ENCODE measurements at regions of chr3 and their contacts with region 1.

Region 1: GRCh38 chr3:48847504-48848423 is at the start of gene PRKAR2A:
- DNase-seq: peak; percentile 92
- H3K4me3 ChIP-seq: peak within 1 kb of the TSS; percentile 48 to 68 (median 59)
- H3K27ac ChIP-seq: peak within 1 kb of the TSS; percentile 44
- H3K4me1 ChIP-seq: peaks cover 9% of the 10 kb centered on the region
- H3K27me3 ChIP-seq: no peaks in the 10 kb centered on the region
- CTCF ChIP-seq: no peak
- POLR2A ChIP-seq: peak; percentile 69
- total RNA-seq, gene PRKAR2A: 62.8 and 69.9 TPM in 2 replicates

Region 2: DNA sequence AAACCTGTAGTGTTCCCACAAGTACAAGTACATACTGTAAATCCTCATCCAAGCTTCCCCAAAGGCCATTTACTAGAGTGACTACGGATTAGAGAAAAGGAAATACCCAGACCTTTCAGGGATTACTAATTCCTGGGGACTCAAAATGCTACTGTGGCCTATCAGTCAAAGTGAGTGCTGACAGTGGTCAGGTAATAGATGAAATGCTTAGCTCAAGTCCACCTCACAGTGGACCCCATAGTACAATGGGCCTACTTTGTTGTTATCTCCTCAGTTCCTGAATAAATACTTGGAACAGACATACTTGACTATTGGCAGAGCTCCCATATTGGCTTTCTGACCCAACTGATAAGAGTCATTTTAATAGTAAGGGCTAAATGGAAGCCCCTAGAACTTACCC is 893.2 kb before region 1 on chr3:
- CTCF ChIA-PET with region 1: no interaction called
- POLR2A ChIA-PET with region 1: no interaction called
- dilution Hi-C with region 1: no loop called
- intact Hi-C with region 1: no loop called
- DNase-seq: peak; percentile 57
- H3K4me3 ChIP-seq: no peak overlapping the region
- H3K27ac ChIP-seq: no peak overlapping the region
- H3K4me1 ChIP-seq: no peaks in the 10 kb centered on the region
- H3K27me3 ChIP-seq: no peaks in the 10 kb centered on the region
- CTCF ChIP-seq: no peak
- POLR2A ChIP-seq: no peak

Region 3: GRCh38 chr3:48877671-48878070 is 29.9 kb after region 1 on chr3:
- CTCF ChIA-PET with region 1: no interaction called
- POLR2A ChIA-PET with region 1: no interaction called
- dilution Hi-C with region 1: no loop called
- intact Hi-C with region 1: no loop called
- DNase-seq: no peak
- H3K4me3 ChIP-seq: no peak overlapping the region
- H3K27ac ChIP-seq: no peak overlapping the region
- H3K4me1 ChIP-seq: no peaks in the 10 kb centered on the region
- H3K27me3 ChIP-seq: no peaks in the 10 kb centered on the region
- CTCF ChIP-seq: no peak
- POLR2A ChIP-seq: no peak

Region 4: GRCh38 chr3:48898383-48899234 is 50.8 kb after region 1 on chr3 and contains the start of gene SLC25A20:
- CTCF ChIA-PET with region 1: no interaction called
- POLR2A ChIA-PET with region 1: no interaction called
- dilution Hi-C with region 1: no loop called
- intact Hi-C with region 1: loop called (anchors 5 kb)
- DNase-seq: peak; percentile 80
- H3K4me3 ChIP-seq: peak within 1 kb of the TSS; percentile 33 to 50 (median 48)
- H3K27ac ChIP-seq: peak within 1 kb of the TSS; percentile 25
- H3K4me1 ChIP-seq: peaks cover 7% of the 10 kb centered on the region
- H3K27me3 ChIP-seq: no peaks in the 10 kb centered on the region
- CTCF ChIP-seq: no peak
- POLR2A ChIP-seq: peak; percentile 31
- total RNA-seq, gene SLC25A20: 7.9 and 8.4 TPM in 2 replicates

Region 5: DNA sequence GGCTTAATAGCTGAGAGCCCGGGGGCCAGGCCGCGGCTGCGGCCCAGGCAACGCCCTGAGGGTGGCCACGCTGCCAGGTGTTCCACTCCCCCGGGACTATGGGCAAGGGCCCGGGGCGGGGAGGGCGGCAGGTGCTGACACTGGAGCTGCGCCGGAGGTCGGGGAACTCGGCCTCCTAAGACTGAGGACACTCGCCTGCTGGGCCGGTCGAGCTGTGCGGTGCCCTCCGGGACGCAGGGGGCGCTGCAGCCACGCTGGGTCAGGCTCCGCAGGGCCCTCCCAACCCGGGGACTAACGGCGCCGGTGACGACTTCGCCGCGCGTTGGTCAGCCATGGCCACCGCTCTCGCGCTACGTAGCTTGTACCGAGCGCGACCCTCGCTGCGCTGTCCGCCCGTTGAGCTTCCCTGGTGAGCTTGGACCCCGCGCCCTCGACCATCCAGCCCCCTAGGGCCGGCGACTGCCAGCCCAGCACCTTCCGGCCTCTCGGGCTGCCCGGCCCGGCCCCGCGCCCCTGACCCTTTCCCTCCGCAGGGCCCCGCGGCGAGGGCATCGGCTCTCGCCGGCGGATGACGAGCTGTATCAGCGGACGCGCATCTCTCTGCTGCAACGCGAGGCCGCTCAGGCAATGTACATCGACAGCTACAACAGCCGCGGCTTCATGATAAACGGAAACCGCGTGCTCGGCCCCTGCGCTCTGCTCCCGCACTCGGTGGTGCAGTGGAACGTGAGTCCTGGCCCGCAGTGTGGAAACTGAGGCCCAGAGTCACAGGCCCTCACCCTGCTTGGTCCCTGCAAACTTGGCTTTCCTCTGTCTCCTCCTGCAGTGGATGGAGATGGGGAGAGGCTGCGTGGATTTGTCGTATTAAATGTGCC is 174.3 kb after region 1 on chr3 and contains the start of gene NDUFAF3:
- CTCF ChIA-PET with region 1: no interaction called
- POLR2A ChIA-PET with region 1: no interaction called
- dilution Hi-C with region 1: no loop called
- intact Hi-C with region 1: loop called (anchors 1 kb)
- DNase-seq: peak; percentile 93
- H3K4me3 ChIP-seq: peak within 1 kb of the TSS; percentile 56 to 59 (median 57)
- H3K27ac ChIP-seq: peak within 1 kb of the TSS; percentile 95
- H3K4me1 ChIP-seq: peaks cover 31% of the 10 kb centered on the region
- H3K27me3 ChIP-seq: no peaks in the 10 kb centered on the region
- CTCF ChIP-seq: peak; percentile 99
- POLR2A ChIP-seq: peak; percentile 96
- total RNA-seq, gene NDUFAF3: 74.5 and 91.1 TPM in 2 replicates

Measured in endothelial cell of umbilical vein (primary cell).